ENCODE measurements at regions of chr11 and their contacts with region 1.

Region 1: DNA sequence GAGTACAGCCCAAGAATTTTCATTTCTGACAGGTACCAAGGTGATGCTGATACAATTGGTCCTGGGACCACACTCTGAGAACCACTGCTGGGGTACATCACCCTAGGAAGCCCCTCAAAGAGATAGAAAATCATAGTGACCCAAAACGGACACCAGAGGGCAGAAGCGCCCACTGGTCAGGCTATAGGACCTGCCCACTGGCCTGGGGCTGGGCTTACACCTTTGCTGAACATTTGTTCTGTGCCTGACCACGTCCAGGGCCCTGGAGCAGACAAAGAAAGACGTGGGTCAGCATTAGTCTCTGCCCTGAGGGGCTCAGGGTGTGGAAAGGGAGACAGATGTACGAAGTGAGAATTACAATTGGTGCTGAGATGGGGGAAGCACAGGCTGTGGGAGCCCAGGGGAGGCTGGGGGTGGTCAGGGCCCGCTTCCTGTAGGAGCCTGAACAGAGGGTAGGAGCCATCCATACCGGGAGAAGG is 14.4 kb upstream of the SERPINH1 start:
- DNase-seq: no peak
- ATAC-seq: peak; percentile 61
- H3K4me3 Mint-ChIP-seq: no peak overlapping the region
- H3K27ac Mint-ChIP-seq: no peak overlapping the region
- H3K4me1 Mint-ChIP-seq: no peaks in the 10 kb centered on the region
- H3K27me3 Mint-ChIP-seq: peaks cover 17% of the 10 kb centered on the region
- CTCF ChIP-seq: no peak

Region 2: DNA sequence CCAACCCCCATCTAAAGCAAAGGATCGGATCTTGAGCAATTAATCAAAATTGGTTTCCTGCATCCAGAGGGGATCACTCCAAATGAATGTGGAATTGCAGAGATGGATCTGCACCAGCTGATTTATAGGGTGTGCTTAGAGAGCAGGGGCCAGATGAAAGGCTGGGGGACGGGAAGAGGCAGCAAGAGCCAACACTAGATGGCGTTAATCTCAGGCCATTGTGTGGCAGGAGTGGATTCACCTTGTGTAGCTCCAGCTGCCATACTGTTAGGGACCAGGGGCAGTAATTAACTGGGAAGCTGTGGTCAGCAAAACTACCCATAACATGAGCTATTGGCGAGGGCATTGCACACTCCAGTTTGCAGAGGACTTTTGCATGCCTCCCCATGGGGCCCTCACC is 50.0 kb after region 1 on chr11:
- CTCF ChIA-PET with region 1: no interaction called
- POLR2A ChIA-PET with region 1: no interaction called
- intact Hi-C with region 1: loop called (anchors 1 kb)
- DNase-seq: no peak
- ATAC-seq: no peak
- H3K4me3 Mint-ChIP-seq: no peak overlapping the region
- H3K27ac Mint-ChIP-seq: no peak overlapping the region
- H3K4me1 Mint-ChIP-seq: peaks cover 20% of the 10 kb centered on the region
- H3K27me3 Mint-ChIP-seq: peaks cover 4% of the 10 kb centered on the region
- CTCF ChIP-seq: no peak

Region 3: DNA sequence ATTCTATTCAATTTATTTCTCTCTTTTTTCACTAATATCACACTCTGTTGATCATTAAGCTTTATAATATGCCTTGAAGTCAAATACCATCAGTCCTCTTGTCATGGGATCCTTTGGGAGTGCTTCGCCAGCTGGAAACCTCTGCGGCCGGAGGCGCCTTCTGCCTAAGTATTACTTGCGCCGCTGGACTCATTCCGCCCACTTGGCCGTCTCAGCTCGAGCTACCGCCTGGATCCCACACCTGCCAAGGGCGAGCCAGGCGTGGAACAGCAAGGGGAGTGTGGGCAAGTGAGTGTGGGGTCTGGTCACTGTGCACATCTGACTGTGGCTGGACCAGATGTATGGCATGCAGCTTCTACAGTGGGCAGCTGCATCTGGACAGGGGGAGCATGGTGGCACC is 130.3 kb after region 1 on chr11:
- CTCF ChIA-PET with region 1: no interaction called
- POLR2A ChIA-PET with region 1: interaction called, 13 read pairs
- intact Hi-C with region 1: no loop called
- DNase-seq: no peak
- ATAC-seq: no peak
- H3K4me3 Mint-ChIP-seq: no peak overlapping the region
- H3K27ac Mint-ChIP-seq: no peak overlapping the region
- H3K4me1 Mint-ChIP-seq: no peaks in the 10 kb centered on the region
- H3K27me3 Mint-ChIP-seq: peaks cover 2% of the 10 kb centered on the region
- CTCF ChIP-seq: no peak

Region 4: GRCh38 chr11:75768112-75768908 is 220.7 kb after region 1 on chr11 and contains the start of gene DGAT2:
- CTCF ChIA-PET with region 1: no interaction called
- POLR2A ChIA-PET with region 1: no interaction called
- intact Hi-C with region 1: loop called (anchors 1 kb)
- DNase-seq: peak; percentile 84
- ATAC-seq: peak; percentile 76
- H3K4me3 Mint-ChIP-seq: peak within 1 kb of the TSS; percentile 83
- H3K27ac Mint-ChIP-seq: peak within 1 kb of the TSS; percentile 87
- H3K4me1 Mint-ChIP-seq: peaks cover 56% of the 10 kb centered on the region
- H3K27me3 Mint-ChIP-seq: no peaks in the 10 kb centered on the region
- CTCF ChIP-seq: no peak
- total RNA-seq, gene DGAT2: 6.9 and 7.9 TPM in 2 replicates

Region 5: DNA sequence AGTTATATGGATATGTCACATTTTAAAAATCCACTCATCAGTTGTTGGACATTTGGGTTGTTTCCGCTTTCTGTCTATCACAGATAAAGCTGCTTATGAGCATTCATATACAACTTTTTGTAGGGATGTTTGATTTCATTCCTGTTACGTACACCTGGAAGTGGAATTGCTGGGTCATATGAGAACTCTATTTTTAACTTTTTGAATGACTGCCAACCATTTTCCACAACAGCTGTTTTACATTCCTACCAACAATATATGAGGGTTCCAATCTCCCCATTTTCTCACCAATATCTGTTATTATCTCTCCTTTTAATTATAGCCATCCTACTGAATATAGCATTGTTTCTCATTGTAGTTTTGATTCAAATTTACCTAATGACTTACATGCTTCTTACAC is 439.3 kb after region 1 on chr11:
- CTCF ChIA-PET with region 1: no interaction called
- POLR2A ChIA-PET with region 1: no interaction called
- intact Hi-C with region 1: no loop called
- DNase-seq: no peak
- ATAC-seq: no peak
- H3K4me3 Mint-ChIP-seq: no peak overlapping the region
- H3K27ac Mint-ChIP-seq: no peak overlapping the region
- H3K4me1 Mint-ChIP-seq: peaks cover 6% of the 10 kb centered on the region
- H3K27me3 Mint-ChIP-seq: no peaks in the 10 kb centered on the region
- CTCF ChIP-seq: no peak

Region 6: GRCh38 chr11:76152086-76152681 is 604.6 kb after region 1 on chr11:
- CTCF ChIA-PET with region 1: no interaction called
- POLR2A ChIA-PET with region 1: no interaction called
- intact Hi-C with region 1: loop called (anchors 2 kb)
- DNase-seq: peak; percentile 68
- ATAC-seq: peak; percentile 88
- H3K4me3 Mint-ChIP-seq: peak overlapping the region; percentile 80
- H3K27ac Mint-ChIP-seq: peak overlapping the region; percentile 41
- H3K4me1 Mint-ChIP-seq: peaks cover 22% of the 10 kb centered on the region
- H3K27me3 Mint-ChIP-seq: no peaks in the 10 kb centered on the region
- CTCF ChIP-seq: no peak